GM18951 (cell line): ENCODE measurements at regions of chr7 and their contacts with region 1.

Region 1: DNA sequence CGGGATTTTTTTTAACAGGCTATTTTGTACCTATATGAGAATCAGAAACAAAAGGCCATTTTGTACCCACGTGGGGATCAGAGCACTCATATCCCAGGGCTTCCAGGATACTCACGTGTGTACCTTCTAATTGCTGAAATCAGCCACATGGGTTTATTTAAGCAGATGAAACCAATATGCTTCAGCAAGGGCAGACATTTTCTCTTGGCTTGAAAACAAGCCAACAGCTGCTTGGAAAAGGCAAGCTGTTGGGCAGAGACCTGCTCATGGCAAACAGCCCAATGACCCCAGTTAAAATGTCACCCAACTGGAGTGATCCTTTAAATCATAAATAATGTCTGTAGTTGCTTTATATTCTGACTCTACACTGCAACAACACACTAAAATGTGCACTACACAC is 26.5 kb upstream of the TOMM7 start:
- POLR2A ChIP-seq: no peak

Region 2: DNA sequence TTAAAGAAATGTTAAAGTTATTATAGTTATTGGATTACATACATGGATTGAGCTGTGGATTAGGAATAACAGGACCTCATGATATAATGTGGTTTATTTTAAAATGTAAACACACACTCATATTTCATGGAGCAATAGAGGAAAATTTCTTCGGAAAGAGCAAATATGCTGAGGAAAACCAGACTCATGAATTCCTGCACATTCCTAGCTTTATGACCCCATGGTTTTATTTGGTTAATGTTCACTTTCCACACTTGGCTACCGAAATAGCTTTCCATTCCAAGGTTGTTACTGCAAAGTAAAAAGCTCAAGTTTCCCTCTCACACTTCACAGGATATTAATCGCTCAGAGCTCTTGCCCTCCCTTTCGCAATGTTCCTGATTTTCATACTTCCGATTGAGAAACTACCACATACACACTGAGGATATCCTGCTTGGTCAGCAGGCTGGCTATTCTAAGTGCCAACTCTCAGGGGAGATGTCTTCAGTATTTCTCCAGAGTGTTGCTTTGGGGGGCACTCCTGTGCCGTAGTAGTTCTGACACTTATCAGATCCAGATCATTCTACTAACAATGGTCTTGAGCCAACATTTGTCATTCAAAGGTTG is 271.7 kb before region 1 on chr7:
- in situ Hi-C with region 1: no loop called
- POLR2A ChIP-seq: no peak

Region 3: DNA sequence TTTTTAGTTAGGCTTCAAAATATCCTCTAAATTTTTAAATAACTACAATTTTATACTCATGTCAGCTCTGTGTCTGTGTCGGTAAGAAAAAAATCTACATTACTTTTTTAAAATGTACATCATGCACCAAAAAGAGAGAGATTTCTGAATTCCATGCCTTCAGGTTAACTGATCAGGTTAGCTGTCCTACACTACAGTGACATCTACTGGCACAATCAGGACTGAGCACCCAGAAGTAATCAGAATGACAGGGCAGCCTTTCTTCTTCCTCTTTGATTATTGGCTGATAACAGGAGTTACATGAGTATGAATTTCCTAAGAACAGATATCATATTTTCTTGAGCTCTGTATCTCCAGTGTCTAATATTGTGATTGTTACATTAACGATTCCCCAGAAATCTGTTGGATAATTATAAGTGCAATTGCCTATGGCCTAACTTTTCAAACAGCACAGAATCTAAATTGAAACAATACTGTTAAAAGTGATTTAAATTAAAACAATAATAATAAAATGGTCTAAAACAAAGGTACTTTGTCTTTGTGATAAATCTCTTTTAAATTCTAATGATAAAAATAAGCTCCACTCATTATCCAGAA is 206.5 kb after region 1 on chr7:
- in situ Hi-C with region 1: loop called (anchors 5 kb)
- POLR2A ChIP-seq: no peak

Region 4: DNA sequence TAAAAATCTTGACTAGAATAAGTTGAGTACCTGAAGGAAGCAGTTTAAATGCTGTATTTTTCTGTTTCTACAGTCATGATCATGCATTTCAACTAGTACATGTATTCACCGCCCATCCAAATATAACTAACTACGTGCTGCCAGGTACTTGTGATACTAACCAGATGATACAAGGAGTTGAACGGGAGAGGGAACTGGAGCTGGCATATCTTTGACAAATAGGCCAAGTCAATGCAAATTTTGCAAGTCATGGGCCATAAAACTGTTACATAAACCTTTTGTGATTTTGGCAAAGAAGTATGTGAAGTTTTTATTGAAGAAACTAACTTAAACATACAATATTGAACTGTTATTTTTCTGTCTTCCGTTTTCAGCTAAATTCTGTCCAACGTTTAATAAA is 347.1 kb after region 1 on chr7:
- in situ Hi-C with region 1: no loop called
- POLR2A ChIP-seq: no peak